Endothelial cell of umbilical vein (primary cell): ENCODE measurements at regions of chr1 and their contacts with region 1.

Region 1: DNA sequence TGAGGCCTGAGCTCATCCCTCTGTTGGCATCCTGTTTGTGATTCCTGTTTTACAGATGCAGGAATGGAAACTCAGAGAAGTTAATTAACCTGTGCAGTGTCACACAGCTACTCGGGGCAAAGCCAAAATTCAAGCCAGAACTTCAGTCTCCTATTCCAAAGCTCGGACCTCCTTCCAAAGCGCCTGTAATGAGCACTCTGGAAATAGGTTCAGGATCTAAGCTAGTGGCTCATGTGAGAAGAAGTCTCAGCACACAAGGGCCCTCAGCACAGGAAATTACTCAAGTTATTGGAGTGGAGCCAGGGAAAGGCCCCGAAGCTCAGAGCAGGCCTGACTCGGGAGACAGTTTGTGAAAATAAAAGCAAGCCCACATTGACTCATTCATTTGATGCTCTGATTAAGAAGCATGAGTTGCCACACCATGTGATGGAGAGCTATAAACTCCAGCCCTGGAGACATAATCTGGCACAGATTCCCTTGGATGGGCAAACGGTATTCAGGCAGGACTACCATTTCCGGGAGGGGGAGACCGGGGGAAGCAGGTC is 50.6 kb upstream of the LYST start:
- DNase-seq: peak; percentile 98
- H3K4me3 ChIP-seq: no peak overlapping the region
- H3K27ac ChIP-seq: peak overlapping the region; percentile 93
- H3K4me1 ChIP-seq: peaks cover 33% of the 10 kb centered on the region
- H3K27me3 ChIP-seq: no peaks in the 10 kb centered on the region
- CTCF ChIP-seq: no peak
- POLR2A ChIP-seq: peak; percentile 31

Region 2: DNA sequence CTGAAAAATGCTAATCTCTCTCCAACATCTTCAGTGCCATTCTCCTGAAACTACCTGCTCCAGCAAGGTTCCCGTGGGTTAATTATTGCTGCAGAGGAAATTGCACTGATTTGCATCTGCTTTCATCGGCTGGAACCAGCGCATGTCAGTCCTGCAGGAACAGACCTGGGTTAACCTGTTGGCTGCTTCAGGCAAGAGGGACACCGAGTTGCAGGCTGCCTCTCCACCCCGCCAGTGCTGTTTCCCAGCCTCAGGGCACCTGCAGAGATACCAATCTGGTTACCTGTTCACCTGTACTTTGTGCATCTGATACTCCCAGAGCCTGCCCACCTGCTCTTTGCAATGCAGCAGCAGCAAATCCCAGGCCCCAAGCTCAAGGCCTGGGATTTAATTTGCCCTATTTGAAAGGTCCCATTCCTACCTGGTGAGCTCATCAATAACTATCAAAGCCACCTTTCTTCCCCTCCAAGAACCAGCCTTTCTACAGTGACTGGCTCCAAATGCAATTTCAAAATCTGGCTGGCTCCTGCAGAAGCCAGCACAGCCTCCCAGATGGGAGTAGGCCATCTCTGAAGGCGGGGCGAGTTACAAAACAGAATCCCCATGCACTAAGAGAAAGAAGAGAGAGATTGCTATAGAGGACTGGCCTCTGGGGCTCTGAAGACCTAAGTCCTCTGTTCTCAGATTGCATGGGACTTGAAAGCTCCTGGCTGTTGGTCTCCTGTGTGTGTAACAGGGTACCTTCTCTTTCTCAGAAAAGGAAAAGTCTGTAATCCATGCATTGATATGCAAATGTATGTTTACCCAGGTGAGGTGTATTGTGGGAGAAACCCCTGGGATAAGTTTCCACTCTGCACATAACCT is 856.5 kb before region 1 on chr1:
- CTCF ChIA-PET with region 1: no interaction called
- POLR2A ChIA-PET with region 1: no interaction called
- dilution Hi-C with region 1: no loop called
- intact Hi-C with region 1: no loop called
- DNase-seq: no peak
- H3K4me3 ChIP-seq: no peak overlapping the region
- H3K27ac ChIP-seq: no peak overlapping the region
- H3K4me1 ChIP-seq: peaks cover 9% of the 10 kb centered on the region
- H3K27me3 ChIP-seq: no peaks in the 10 kb centered on the region
- CTCF ChIP-seq: no peak
- POLR2A ChIP-seq: no peak

Region 3: DNA sequence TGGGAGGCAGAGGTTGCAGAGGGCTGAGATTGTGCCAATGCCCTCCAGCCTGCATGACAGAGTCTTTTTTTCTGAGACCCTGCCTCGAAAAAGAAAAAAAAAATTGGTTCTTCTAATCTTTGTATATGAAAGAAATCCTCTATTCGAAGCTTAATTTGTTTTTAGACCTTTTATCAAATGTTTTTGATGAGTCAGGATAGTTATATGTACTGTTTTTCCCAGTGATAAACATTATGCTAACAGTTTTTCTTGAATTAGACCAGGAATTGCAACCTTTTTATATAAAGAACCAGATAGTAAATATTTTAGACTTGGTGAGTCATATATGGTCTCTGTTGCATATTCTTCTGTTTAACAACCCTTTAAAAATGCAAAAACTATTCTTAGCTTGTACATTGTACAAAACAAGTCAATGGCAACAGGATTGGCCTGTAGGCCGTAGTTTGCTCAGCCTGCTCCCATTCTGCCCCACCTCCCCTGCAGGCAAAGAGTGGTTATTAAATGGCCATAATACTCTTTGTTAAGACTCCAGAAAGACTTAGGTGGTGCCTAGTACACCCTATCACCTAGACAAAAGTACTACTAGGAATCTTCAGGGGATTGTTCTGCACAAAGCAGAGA is 95.9 kb before region 1 on chr1:
- CTCF ChIA-PET with region 1: no interaction called
- POLR2A ChIA-PET with region 1: no interaction called
- dilution Hi-C with region 1: no loop called
- intact Hi-C with region 1: no loop called
- DNase-seq: no peak
- H3K4me3 ChIP-seq: no peak overlapping the region
- H3K27ac ChIP-seq: no peak overlapping the region
- H3K4me1 ChIP-seq: no peaks in the 10 kb centered on the region
- H3K27me3 ChIP-seq: no peaks in the 10 kb centered on the region
- CTCF ChIP-seq: no peak
- POLR2A ChIP-seq: no peak

Region 4: GRCh38 chr1:235866913-235867845 is 50.2 kb before region 1 on chr1:
- CTCF ChIA-PET with region 1: interaction called, 23 read pairs
- POLR2A ChIA-PET with region 1: no interaction called
- dilution Hi-C with region 1: no loop called
- intact Hi-C with region 1: loop called (anchors 1 kb)
- DNase-seq: peak; percentile 92
- H3K4me3 ChIP-seq: peak overlapping the region; percentile 60 to 97 (median 61)
- H3K27ac ChIP-seq: peak overlapping the region; percentile 1
- H3K4me1 ChIP-seq: peaks cover 13% of the 10 kb centered on the region
- H3K27me3 ChIP-seq: peaks cover 0 to 2% of the 10 kb centered on the region in 2 experiments
- CTCF ChIP-seq: no peak
- POLR2A ChIP-seq: peak; percentile 85

Region 5: GRCh38 chr1:235933017-235933765 is 15.9 kb after region 1 on chr1:
- CTCF ChIA-PET with region 1: interaction called, 13 read pairs
- POLR2A ChIA-PET with region 1: no interaction called
- dilution Hi-C with region 1: no loop called
- intact Hi-C with region 1: loop called (anchors 1 kb)
- DNase-seq: peak; percentile 25
- H3K4me3 ChIP-seq: no peak overlapping the region
- H3K27ac ChIP-seq: no peak overlapping the region
- H3K4me1 ChIP-seq: peaks cover 8% of the 10 kb centered on the region
- H3K27me3 ChIP-seq: no peaks in the 10 kb centered on the region
- CTCF ChIP-seq: no peak
- POLR2A ChIP-seq: no peak

Region 6: GRCh38 chr1:235984041-235984825 is 66.9 kb after region 1 on chr1:
- CTCF ChIA-PET with region 1: no interaction called
- POLR2A ChIA-PET with region 1: no interaction called
- dilution Hi-C with region 1: no loop called
- intact Hi-C with region 1: loop called (anchors 2 kb)
- DNase-seq: peak; percentile 92
- H3K4me3 ChIP-seq: peak overlapping the region in 1 of 3 experiments; percentile 29
- H3K27ac ChIP-seq: peak overlapping the region; percentile 96
- H3K4me1 ChIP-seq: peaks cover 47% of the 10 kb centered on the region
- H3K27me3 ChIP-seq: no peaks in the 10 kb centered on the region
- CTCF ChIP-seq: no peak
- POLR2A ChIP-seq: no peak

Region 7: DNA sequence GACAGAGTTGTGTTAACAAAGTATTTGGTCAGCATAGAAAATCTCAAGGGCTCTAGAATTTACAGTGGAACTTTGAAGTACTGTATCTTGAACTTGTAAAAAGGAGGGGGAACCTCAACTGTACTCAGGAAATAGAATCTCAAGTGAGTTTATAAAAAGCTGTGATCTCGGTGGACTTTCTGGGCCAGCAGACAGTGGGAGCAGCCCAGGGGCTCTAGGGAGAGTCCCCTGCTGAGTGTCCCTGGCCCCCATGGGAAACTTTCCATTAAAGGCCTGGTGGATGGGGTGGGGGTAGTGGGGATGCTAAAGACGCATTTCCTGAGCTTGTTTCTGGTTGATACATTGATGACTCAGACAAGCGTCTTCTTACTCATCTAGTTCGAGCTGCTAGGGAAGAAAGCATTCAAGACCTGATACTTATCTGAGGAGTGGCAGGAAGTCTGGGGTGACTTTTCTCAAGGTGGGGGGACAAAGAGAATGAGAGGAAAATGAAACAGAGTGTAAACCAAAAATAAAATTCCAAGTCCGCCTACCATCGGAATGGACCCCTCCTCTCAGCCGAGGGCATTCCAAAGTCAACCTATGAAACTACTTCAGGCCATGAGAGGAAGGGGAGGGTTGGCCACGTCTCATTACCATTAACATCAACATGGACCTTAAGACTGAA is 82.1 kb after region 1 on chr1:
- CTCF ChIA-PET with region 1: no interaction called
- POLR2A ChIA-PET with region 1: no interaction called
- dilution Hi-C with region 1: no loop called
- intact Hi-C with region 1: no loop called
- DNase-seq: peak; percentile 95
- H3K4me3 ChIP-seq: no peak overlapping the region
- H3K27ac ChIP-seq: peak overlapping the region; percentile 89
- H3K4me1 ChIP-seq: peaks cover 38% of the 10 kb centered on the region
- H3K27me3 ChIP-seq: no peaks in the 10 kb centered on the region
- CTCF ChIP-seq: no peak
- POLR2A ChIP-seq: peak; percentile 40

Region 8: GRCh38 chr1:236064674-236065508 is 147.6 kb after region 1 on chr1 and contains the start of gene NID1:
- CTCF ChIA-PET with region 1: no interaction called
- POLR2A ChIA-PET with region 1: interaction called, 3 read pairs
- dilution Hi-C with region 1: no loop called
- intact Hi-C with region 1: loop called (anchors 2 kb)
- DNase-seq: peak; percentile 75
- H3K4me3 ChIP-seq: peak within 1 kb of the TSS; percentile 75 to 89 (median 89)
- H3K27ac ChIP-seq: peak within 1 kb of the TSS; percentile 55
- H3K4me1 ChIP-seq: peaks cover 8% of the 10 kb centered on the region
- H3K27me3 ChIP-seq: no peaks in the 10 kb centered on the region
- CTCF ChIP-seq: peak in 1 of 2 donors; percentile 52
- POLR2A ChIP-seq: peak; percentile 27
- total RNA-seq, gene NID1: 87.0 and 102 TPM in 2 replicates

Region 9: DNA sequence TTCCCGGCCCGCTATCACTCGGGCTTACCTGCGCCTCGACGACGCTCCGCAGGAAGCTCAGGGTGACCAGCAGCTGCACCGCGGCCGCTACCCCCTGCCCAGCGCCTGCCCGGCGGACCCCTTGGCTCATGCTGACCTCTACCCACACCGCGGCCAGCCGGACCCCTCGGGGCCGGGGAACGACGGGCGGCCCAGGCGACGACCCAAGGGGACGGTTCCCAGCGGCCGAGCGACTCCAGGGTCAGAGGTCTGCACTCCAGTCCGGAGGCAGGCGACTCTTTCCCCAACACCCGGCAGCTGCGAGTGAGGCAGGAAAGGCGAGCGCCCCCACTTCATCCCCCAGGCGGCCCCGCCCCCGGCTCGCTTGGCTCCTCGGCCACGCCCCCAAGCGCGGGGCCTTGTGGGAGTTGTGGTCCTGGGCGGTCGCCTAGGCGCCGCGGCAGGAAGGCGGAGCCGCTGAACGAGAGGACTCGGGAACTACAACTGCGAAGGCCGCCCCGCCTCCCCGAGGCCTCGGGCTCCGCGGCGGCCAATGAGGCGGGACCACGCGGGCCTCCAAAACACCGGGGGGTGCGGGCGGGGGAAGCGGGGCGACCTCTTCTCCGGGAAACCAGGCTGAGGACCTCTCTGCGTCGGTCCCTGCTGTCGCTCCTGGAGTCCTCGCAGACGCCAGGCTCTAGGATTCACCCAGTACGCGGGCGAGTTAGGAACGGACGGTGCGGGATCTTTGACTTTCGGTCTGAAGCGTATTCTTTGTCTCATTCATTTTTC is 364.5 kb after region 1 on chr1 and contains the start of gene ERO1B:
- CTCF ChIA-PET with region 1: no interaction called
- POLR2A ChIA-PET with region 1: no interaction called
- dilution Hi-C with region 1: no loop called
- intact Hi-C with region 1: loop called (anchors 5 kb)
- DNase-seq: peak; percentile 95
- H3K4me3 ChIP-seq: peak within 1 kb of the TSS; percentile 39 to 99 (median 65)
- H3K27ac ChIP-seq: no peak within 1 kb of the TSS
- H3K4me1 ChIP-seq: peaks cover 3% of the 10 kb centered on the region
- H3K27me3 ChIP-seq: peaks cover 16 to 22% of the 10 kb centered on the region in 2 experiments
- CTCF ChIP-seq: peak in 1 of 2 donors; percentile 2
- POLR2A ChIP-seq: peak; percentile 21
- total RNA-seq, gene ERO1B: 3.6 and 5.1 TPM in 2 replicates